ENCODE measurements at regions of chr1 and their contacts with region 1.

Region 1: GRCh38 chr1:98468111-98468717 is 193.3 kb upstream of the SNX7 start:
- DNase-seq: peak; percentile 60 to 79 (median 75)
- H3K4me3 ChIP-seq: no peak overlapping the region
- H3K27ac ChIP-seq: no peak overlapping the region
- H3K4me1 ChIP-seq: no peaks in the 10 kb centered on the region
- H3K27me3 ChIP-seq: no peaks in the 10 kb centered on the region

Region 2: DNA sequence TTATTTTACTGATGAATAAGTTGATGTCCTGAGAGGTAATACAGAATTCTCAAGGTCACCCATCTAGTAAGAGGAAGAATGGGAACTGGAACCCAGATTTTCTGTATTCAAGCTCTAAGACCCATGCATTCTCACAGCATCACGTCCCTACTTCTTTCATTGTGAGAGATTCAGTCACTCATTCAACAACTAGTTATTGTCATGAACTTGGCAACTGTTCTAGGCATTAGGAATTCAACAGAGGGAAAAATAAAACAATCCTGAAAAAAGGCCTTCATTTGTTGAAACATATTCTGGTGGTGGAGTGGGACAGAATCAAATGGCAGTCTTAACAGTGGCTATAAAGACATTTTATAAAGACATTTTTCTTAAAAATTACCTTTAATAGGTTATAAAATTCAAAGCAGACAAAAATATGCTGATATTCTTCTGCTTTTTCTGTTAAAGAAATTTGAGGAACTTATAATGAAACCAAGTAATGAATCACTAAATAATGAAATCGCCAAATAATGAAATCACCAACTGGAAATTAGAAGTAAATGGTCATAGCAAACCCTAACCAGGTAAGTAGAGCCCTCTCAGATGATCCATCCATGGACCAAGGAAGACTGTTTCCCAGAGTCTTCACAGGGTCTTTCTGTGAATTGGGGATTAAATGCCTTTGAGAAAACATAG is 410.8 kb before region 1 on chr1:
- CTCF ChIA-PET with region 1: interaction called, 13 read pairs
- POLR2A ChIA-PET with region 1: no interaction called
- DNase-seq: peak in 1 of 3 donors; percentile 18
- H3K4me3 ChIP-seq: no peak overlapping the region
- H3K27ac ChIP-seq: no peak overlapping the region
- H3K4me1 ChIP-seq: peaks cover 0 to 14% (median 13%) of the 10 kb centered on the region in 4 experiments
- H3K27me3 ChIP-seq: peaks cover 5 to 25% (median 12%) of the 10 kb centered on the region in 5 experiments